CD4-positive, alpha-beta T cell (primary cell): ENCODE measurements at regions of chr19 and their contacts with region 1.

Region 1: DNA sequence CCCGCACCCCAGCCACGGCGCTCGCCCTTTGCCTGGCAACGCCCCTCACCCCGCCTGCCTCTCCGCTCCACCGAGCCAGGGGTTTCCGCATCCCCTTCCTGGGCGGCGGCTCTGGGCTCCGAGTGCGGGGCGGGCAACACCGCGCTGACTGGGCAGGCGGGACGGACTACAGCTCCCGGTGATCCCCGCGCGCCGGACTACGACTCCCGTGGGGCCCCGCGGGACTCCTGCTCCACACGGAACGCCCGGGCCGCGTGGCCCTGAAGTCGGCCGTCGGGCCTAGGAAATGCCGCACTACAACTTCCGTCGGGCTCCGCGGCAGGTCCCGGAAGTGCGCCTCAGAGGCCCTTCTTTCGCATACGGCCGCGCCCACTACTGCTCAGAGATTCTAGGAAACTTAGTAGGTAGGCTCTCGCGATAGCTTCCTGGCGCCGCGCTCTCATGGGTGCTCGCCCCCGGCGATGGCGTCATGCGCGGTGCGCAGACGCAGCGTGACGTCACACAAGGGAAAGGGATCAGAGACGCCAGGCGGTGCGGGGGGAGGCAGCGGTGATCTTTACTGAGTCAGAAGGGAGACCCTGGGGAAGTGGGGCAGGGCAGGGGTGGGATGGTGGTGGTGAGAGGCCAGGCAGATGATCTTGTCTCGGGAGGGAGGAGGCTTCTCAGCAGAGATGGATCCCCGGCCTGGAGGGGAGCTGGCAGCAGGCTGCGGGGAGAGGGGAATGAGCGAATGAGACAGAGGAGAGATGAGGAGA is at the start of gene JOSD2:
- DNase-seq: peak; percentile 94 to 100 (median 96)
- ATAC-seq: peak; percentile 91
- H3K4me3 ChIP-seq: peak within 1 kb of the TSS; percentile 79
- H3K4me3 Mint-ChIP-seq: peak within 1 kb of the TSS; percentile 95
- H3K27ac ChIP-seq: peak within 1 kb of the TSS; percentile 63 to 91
- H3K27ac Mint-ChIP-seq: peak within 1 kb of the TSS; percentile 89
- H3K4me1 ChIP-seq: peaks cover 23% of the 10 kb centered on the region
- H3K4me1 Mint-ChIP-seq: peaks cover 15% of the 10 kb centered on the region
- H3K27me3 ChIP-seq: peaks cover 0 to 4% of the 10 kb centered on the region in 2 experiments
- H3K27me3 Mint-ChIP-seq: peaks cover 6% of the 10 kb centered on the region
- CTCF ChIP-seq: no peak
- total RNA-seq, gene JOSD2: 11.7 to 11.9 TPM

Region 2: GRCh38 chr19:50376166-50377050 is 134.8 kb before region 1 on chr19 and contains the start of gene NR1H2:
- CTCF ChIA-PET with region 1: no interaction called
- POLR2A ChIA-PET with region 1: interaction called, 16 read pairs
- intact Hi-C with region 1: loop called in 1 of 2 experiments (anchors 1 kb)
- DNase-seq: peak; percentile 90 to 99 (median 94)
- ATAC-seq: peak; percentile 82
- H3K4me3 ChIP-seq: peak within 1 kb of the TSS; percentile 94
- H3K4me3 Mint-ChIP-seq: peak within 1 kb of the TSS; percentile 98
- H3K27ac ChIP-seq: peak within 1 kb of the TSS; percentile 99 to 100
- H3K27ac Mint-ChIP-seq: peak within 1 kb of the TSS; percentile 99
- H3K4me1 ChIP-seq: peaks cover 21% of the 10 kb centered on the region
- H3K4me1 Mint-ChIP-seq: peaks cover 20% of the 10 kb centered on the region
- H3K27me3 ChIP-seq: no peaks in the 10 kb centered on the region
- H3K27me3 Mint-ChIP-seq: no peaks in the 10 kb centered on the region
- CTCF ChIP-seq: no peak
- total RNA-seq, gene NR1H2: 261 to 265 TPM

Region 3: GRCh38 chr19:50431343-50432220 is 79.7 kb before region 1 on chr19:
- CTCF ChIA-PET with region 1: no interaction called
- POLR2A ChIA-PET with region 1: interaction called, 4 read pairs
- intact Hi-C with region 1: loop called in 1 of 2 experiments (anchors 5 kb)
- DNase-seq: peak; percentile 78 to 94 (median 86)
- ATAC-seq: peak; percentile 90
- H3K4me3 ChIP-seq: peak overlapping the region; percentile 68
- H3K4me3 Mint-ChIP-seq: peak overlapping the region; percentile 92
- H3K27ac ChIP-seq: peak overlapping the region; percentile 37 to 58
- H3K27ac Mint-ChIP-seq: peak overlapping the region; percentile 76
- H3K4me1 ChIP-seq: peaks cover 28% of the 10 kb centered on the region
- H3K4me1 Mint-ChIP-seq: peaks cover 19% of the 10 kb centered on the region
- H3K27me3 ChIP-seq: peaks cover 6 to 19% of the 10 kb centered on the region in 2 experiments
- H3K27me3 Mint-ChIP-seq: peaks cover 28% of the 10 kb centered on the region
- CTCF ChIP-seq: no peak

Region 4: DNA sequence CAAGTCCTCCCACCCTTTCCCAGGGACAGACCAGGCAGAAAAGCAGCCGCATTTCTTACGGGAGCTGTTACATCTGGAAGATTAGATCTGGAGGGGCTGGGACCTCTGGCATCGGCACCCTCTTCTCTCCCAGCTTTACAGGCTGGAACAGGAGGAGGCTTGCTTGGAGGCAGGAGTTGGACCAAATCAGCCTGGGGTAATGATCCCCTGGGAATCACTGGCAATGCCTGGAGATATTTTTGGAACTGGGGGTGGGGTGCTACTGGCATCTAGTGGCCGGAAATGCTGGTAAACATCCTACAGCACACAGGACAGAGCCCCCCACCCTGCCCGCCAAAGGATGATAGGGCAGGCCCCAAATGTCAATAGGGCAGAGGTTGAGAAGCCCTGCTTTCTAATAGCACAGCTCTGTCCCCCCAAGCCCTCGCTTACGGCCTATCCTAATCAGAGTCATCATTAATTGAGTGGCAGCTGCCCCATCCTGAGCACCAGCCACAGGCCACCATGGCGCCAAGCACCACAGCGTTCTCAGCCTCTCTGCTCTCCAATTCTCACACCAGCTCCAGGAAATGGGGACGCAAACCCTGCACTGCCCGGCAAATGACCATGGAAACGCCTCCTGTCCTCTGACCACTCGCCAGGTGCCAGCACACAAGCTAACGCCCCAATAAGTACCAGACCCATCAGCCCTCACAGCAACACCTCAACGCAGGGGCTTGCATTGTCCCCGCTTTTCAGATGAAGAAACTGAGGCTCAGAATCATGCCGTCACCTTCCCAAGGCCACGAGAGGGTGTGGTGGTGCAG is 36.3 kb after region 1 on chr19:
- CTCF ChIA-PET with region 1: no interaction called
- POLR2A ChIA-PET with region 1: no interaction called
- intact Hi-C with region 1: no loop called
- DNase-seq: no peak
- ATAC-seq: no peak
- H3K4me3 ChIP-seq: no peak overlapping the region
- H3K4me3 Mint-ChIP-seq: no peak overlapping the region
- H3K27ac ChIP-seq: no peak overlapping the region
- H3K27ac Mint-ChIP-seq: no peak overlapping the region
- H3K4me1 ChIP-seq: peaks cover 3% of the 10 kb centered on the region
- H3K4me1 Mint-ChIP-seq: peaks cover 4% of the 10 kb centered on the region
- H3K27me3 ChIP-seq: peaks cover 11 to 30% of the 10 kb centered on the region in 2 experiments
- H3K27me3 Mint-ChIP-seq: peaks cover 42% of the 10 kb centered on the region
- CTCF ChIP-seq: no peak

Region 5: DNA sequence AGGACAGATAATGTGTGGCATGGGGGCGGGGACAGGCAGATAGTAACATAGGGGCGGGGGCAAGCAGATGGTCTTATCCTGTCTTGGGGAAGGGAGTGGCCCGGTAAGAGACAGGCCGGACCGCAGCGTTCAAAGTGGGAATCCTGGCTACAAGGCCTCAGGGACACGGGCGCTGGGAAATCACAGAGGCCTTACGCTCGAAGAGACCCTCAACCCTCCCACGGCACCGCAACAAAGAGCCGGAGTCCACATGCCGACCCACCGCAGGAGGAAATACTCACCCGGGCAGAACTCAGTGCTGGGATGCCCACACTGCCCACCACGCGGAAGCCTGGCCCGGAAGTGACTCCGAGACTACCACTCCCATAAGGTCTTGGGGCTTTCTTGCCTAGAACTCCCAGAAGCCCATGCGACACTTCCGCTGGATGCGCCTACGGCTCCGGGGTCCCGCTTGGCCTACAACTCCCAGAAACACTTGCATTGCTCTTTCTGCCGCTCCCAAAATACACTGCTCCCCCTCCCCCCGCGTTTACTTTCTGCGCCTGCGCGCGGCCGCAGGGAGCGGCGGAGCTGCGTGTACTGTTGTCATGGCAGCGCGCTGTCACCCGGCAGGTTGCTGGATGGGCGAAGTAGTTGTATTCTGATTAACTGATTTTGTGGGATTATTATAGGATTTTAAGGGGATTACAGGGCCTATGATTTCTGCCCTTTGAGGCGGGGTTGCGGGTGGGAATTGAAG is 597.0 kb after region 1 on chr19 and contains the start of gene CTU1:
- CTCF ChIA-PET with region 1: no interaction called
- POLR2A ChIA-PET with region 1: no interaction called
- intact Hi-C with region 1: loop called in 1 of 2 experiments (anchors 5 kb)
- DNase-seq: peak; percentile 96 to 100 (median 98)
- ATAC-seq: peak; percentile 98
- H3K4me3 ChIP-seq: peak within 1 kb of the TSS; percentile 83
- H3K4me3 Mint-ChIP-seq: peak within 1 kb of the TSS; percentile 95
- H3K27ac ChIP-seq: peak within 1 kb of the TSS; percentile 60 to 63
- H3K27ac Mint-ChIP-seq: peak within 1 kb of the TSS; percentile 91
- H3K4me1 ChIP-seq: peaks cover 29% of the 10 kb centered on the region
- H3K4me1 Mint-ChIP-seq: peaks cover 38% of the 10 kb centered on the region
- H3K27me3 ChIP-seq: no peaks in the 10 kb centered on the region
- H3K27me3 Mint-ChIP-seq: no peaks in the 10 kb centered on the region
- CTCF ChIP-seq: no peak
- total RNA-seq, gene CTU1: 1.4 to 1.6 TPM